ENCODE measurements at regions of chr18 and their contacts with region 1.

Region 1: GRCh38 chr18:3062798-3063680 is 50.1 kb upstream of the LPIN2 start:
- DNase-seq: peak; percentile 63 to 78 (median 66)
- H3K4me3 ChIP-seq: peak overlapping the region in 1 of 2 donors; percentile 53
- H3K4me3 Mint-ChIP-seq: peak overlapping the region; percentile 70 to 86 (median 81)
- H3K27ac ChIP-seq: peak overlapping the region; percentile 93
- H3K27ac Mint-ChIP-seq: peak overlapping the region; percentile 91 to 100 (median 98)
- H3K4me1 ChIP-seq: peaks cover 67% of the 10 kb centered on the region
- H3K4me1 Mint-ChIP-seq: peaks cover 52 to 72% (median 64%) of the 10 kb centered on the region in 4 donors
- H3K27me3 ChIP-seq: no peaks in the 10 kb centered on the region
- H3K27me3 Mint-ChIP-seq: no peaks in the 10 kb centered on the region

Region 2: DNA sequence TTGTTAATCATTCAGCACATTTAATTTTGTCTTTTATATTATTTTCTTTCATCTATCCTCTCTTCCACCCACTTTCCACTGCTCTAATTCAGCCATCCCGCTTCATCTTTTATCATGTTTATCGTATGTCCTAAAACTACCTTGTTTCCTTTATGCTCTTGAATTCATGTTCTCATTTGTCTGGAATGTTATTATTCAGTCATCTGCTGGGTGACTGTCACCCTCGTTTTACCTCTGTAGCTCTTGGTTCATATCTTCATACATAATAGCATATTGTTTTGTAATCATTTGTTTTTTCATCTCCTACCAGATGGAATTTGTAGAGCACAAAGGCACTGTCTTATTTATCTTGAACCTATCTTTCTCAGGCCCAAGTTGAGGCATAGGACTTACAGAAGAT is 370.5 kb before region 1 on chr18:
- CTCF ChIA-PET with region 1: no interaction called
- POLR2A ChIA-PET with region 1: no interaction called
- intact Hi-C with region 1: no loop called
- DNase-seq: no peak
- H3K4me3 ChIP-seq: no peak overlapping the region
- H3K4me3 Mint-ChIP-seq: peak overlapping the region in 1 of 8 donors; percentile 7
- H3K27ac ChIP-seq: no peak overlapping the region
- H3K27ac Mint-ChIP-seq: peak overlapping the region in 5 of 7 donors; percentile 8 to 54 (median 33)
- H3K4me1 ChIP-seq: peaks cover 21% of the 10 kb centered on the region
- H3K4me1 Mint-ChIP-seq: peaks cover 28 to 49% (median 38%) of the 10 kb centered on the region in 4 donors
- H3K27me3 ChIP-seq: no peaks in the 10 kb centered on the region
- H3K27me3 Mint-ChIP-seq: no peaks in the 10 kb centered on the region

Region 3: GRCh38 chr18:2797951-2798350 is 265.1 kb before region 1 on chr18:
- CTCF ChIA-PET with region 1: no interaction called
- POLR2A ChIA-PET with region 1: no interaction called
- intact Hi-C with region 1: no loop called
- DNase-seq: no peak
- H3K4me3 ChIP-seq: no peak overlapping the region
- H3K4me3 Mint-ChIP-seq: no peak overlapping the region
- H3K27ac ChIP-seq: no peak overlapping the region
- H3K27ac Mint-ChIP-seq: peak overlapping the region in 2 of 7 donors; percentile 43 to 62
- H3K4me1 ChIP-seq: no peaks in the 10 kb centered on the region
- H3K4me1 Mint-ChIP-seq: peaks cover under 1 to 15% (median 9%) of the 10 kb centered on the region in 4 donors
- H3K27me3 ChIP-seq: no peaks in the 10 kb centered on the region
- H3K27me3 Mint-ChIP-seq: no peaks in the 10 kb centered on the region

Region 4: DNA sequence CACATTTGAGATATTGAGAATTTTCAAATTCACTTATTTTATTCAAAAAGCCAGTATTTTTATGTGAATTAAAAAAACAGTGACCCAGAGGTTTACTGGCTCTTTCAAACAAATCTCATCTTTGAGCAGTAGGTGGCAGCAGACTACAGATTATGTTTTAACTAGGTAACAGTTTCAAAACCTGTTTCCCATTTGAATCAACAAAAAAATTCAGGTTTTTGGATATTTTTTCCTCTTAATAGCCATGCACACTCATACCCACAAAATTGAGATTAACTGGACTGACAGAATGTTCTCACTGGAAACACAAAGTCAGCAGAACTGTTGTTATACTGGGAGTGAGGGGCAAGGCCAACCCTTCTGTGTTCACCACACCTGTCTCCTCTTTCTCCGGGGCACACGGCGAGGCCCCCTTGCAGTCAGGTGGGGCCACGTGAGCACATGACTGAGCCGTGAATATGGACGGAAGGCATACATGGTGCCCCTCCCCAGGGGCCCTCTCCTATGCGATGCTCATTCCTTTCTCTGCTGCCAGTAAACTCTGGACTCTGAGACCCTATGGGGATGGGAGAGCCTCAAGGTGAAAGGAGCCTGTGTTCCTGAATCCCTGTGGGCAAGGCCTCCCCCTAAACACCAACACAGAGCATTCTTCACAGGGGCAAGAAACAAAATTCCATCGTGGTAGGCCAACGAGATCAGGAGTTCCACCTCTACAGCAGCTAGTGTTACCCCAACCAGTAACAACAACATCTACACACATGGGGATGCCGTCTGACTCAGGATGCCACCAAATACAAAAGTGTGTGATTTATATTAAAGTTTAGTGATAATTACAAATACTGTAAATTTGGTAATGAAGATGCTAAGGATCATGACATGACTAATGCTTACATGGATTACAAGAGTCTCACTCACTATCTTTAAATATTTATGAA is 130.5 kb before region 1 on chr18:
- CTCF ChIA-PET with region 1: interaction called, 56 read pairs
- POLR2A ChIA-PET with region 1: interaction called, 3 read pairs
- intact Hi-C with region 1: loop called (anchors 1 kb)
- DNase-seq: peak; percentile 59 to 79 (median 73)
- H3K4me3 ChIP-seq: no peak overlapping the region
- H3K4me3 Mint-ChIP-seq: peak overlapping the region in 6 of 8 donors; percentile 18 to 64 (median 44)
- H3K27ac ChIP-seq: peak overlapping the region; percentile 56
- H3K27ac Mint-ChIP-seq: peak overlapping the region; percentile 83 to 94 (median 89)
- H3K4me1 ChIP-seq: peaks cover 36% of the 10 kb centered on the region
- H3K4me1 Mint-ChIP-seq: peaks cover 29 to 43% (median 37%) of the 10 kb centered on the region in 4 donors
- H3K27me3 ChIP-seq: no peaks in the 10 kb centered on the region
- H3K27me3 Mint-ChIP-seq: no peaks in the 10 kb centered on the region

Region 5: DNA sequence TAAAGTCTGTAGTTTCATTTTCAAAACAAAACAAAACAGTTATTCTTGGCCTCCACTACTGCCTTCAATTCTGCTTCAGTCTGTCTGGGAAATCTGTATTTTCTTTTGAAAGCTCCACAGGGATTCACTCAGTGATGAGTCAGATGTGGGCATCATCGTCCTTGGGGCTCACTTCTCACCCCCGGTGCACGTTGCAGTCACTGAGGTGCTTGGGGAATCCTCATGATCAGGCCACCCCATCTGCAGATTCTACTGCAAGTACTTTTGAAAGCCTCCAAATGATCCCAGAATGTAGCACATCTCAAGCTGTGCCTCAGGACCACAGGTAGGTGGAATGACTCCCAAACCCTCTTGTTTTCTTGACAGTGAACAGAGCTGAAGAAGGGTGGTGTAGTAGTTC is 84.4 kb before region 1 on chr18:
- CTCF ChIA-PET with region 1: interaction called, 27 read pairs
- POLR2A ChIA-PET with region 1: interaction called, 45 read pairs
- intact Hi-C with region 1: no loop called
- DNase-seq: peak in 1 of 5 donors; percentile 74
- H3K4me3 ChIP-seq: peak overlapping the region; percentile 8 to 31
- H3K4me3 Mint-ChIP-seq: peak overlapping the region; percentile 75 to 96 (median 90)
- H3K27ac ChIP-seq: peak overlapping the region; percentile 72
- H3K27ac Mint-ChIP-seq: peak overlapping the region; percentile 89 to 96 (median 93)
- H3K4me1 ChIP-seq: peaks cover 90% of the 10 kb centered on the region
- H3K4me1 Mint-ChIP-seq: peaks cover 55 to 93% (median 68%) of the 10 kb centered on the region in 4 donors
- H3K27me3 ChIP-seq: no peaks in the 10 kb centered on the region
- H3K27me3 Mint-ChIP-seq: no peaks in the 10 kb centered on the region

Region 6: GRCh38 chr18:3012964-3013804 is 49.9 kb before region 1 on chr18 and contains the start of gene LPIN2:
- CTCF ChIA-PET with region 1: interaction called, 651 read pairs
- POLR2A ChIA-PET with region 1: interaction called, 89 read pairs
- intact Hi-C with region 1: loop called (anchors 1 kb)
- DNase-seq: peak; percentile 97 to 98 (median 98)
- H3K4me3 ChIP-seq: peak within 1 kb of the TSS; percentile 55 to 70
- H3K4me3 Mint-ChIP-seq: peak within 1 kb of the TSS; percentile 93 to 99 (median 96)
- H3K27ac ChIP-seq: peak within 1 kb of the TSS; percentile 63
- H3K27ac Mint-ChIP-seq: peak within 1 kb of the TSS; percentile 94 to 98 (median 98)
- H3K4me1 ChIP-seq: peaks cover 68% of the 10 kb centered on the region
- H3K4me1 Mint-ChIP-seq: peaks cover 51 to 75% (median 68%) of the 10 kb centered on the region in 4 donors
- H3K27me3 ChIP-seq: no peaks in the 10 kb centered on the region
- H3K27me3 Mint-ChIP-seq: no peaks in the 10 kb centered on the region
- total RNA-seq, gene LPIN2: 95.4 to 103 TPM

Region 7: GRCh38 chr18:3051718-3052410 is 11.2 kb before region 1 on chr18:
- CTCF ChIA-PET with region 1: interaction called, 15 read pairs
- POLR2A ChIA-PET with region 1: interaction called, 16 read pairs
- intact Hi-C with region 1: no loop called
- DNase-seq: peak in 1 of 5 donors; percentile 11
- H3K4me3 ChIP-seq: no peak overlapping the region
- H3K4me3 Mint-ChIP-seq: peak overlapping the region; percentile 15 to 78 (median 42)
- H3K27ac ChIP-seq: no peak overlapping the region
- H3K27ac Mint-ChIP-seq: peak overlapping the region; percentile 12 to 91 (median 82)
- H3K4me1 ChIP-seq: peaks cover 33% of the 10 kb centered on the region
- H3K4me1 Mint-ChIP-seq: peaks cover 27 to 38% (median 32%) of the 10 kb centered on the region in 4 donors
- H3K27me3 ChIP-seq: no peaks in the 10 kb centered on the region
- H3K27me3 Mint-ChIP-seq: no peaks in the 10 kb centered on the region

Region 8: DNA sequence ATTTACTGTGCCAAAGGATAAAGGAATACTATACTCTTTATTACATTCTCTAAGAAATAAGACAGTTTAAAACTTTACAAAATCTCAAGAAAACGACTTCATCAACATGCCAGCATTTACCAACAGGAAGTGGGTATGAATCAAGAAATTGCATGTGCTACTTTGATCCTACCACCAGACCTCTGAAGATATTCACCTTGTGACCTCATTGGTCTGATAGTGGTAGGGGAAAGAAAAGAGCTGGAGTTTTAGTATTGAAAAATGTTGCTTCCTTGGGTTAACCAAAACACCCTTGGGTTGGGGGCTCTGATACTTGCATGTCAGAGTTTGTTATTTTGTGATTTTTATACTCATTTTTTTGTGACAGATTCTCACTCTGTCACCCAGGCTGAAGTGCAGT is 34.0 kb after region 1 on chr18:
- CTCF ChIA-PET with region 1: interaction called, 27 read pairs
- POLR2A ChIA-PET with region 1: interaction called, 4 read pairs
- intact Hi-C with region 1: no loop called
- DNase-seq: peak; percentile 57 to 78 (median 63)
- H3K4me3 ChIP-seq: no peak overlapping the region
- H3K4me3 Mint-ChIP-seq: peak overlapping the region in 6 of 8 donors; percentile 1 to 47 (median 23)
- H3K27ac ChIP-seq: no peak overlapping the region
- H3K27ac Mint-ChIP-seq: peak overlapping the region in 6 of 7 donors; percentile 18 to 86 (median 67)
- H3K4me1 ChIP-seq: peaks cover 18% of the 10 kb centered on the region
- H3K4me1 Mint-ChIP-seq: peaks cover 12 to 22% (median 18%) of the 10 kb centered on the region in 4 donors
- H3K27me3 ChIP-seq: no peaks in the 10 kb centered on the region
- H3K27me3 Mint-ChIP-seq: no peaks in the 10 kb centered on the region

Region 9: GRCh38 chr18:3261371-3262246 is 198.6 kb after region 1 on chr18 and contains the start of gene MYL12B:
- CTCF ChIA-PET with region 1: no interaction called
- POLR2A ChIA-PET with region 1: interaction called, 15 read pairs
- intact Hi-C with region 1: no loop called
- DNase-seq: peak; percentile 83 to 91 (median 86)
- H3K4me3 ChIP-seq: peak within 1 kb of the TSS; percentile 89 to 94
- H3K4me3 Mint-ChIP-seq: peak within 1 kb of the TSS; percentile 94 to 100 (median 98)
- H3K27ac ChIP-seq: peak within 1 kb of the TSS; percentile 90
- H3K27ac Mint-ChIP-seq: peak within 1 kb of the TSS; percentile 98 to 100 (median 99)
- H3K4me1 ChIP-seq: peaks cover 81% of the 10 kb centered on the region
- H3K4me1 Mint-ChIP-seq: peaks cover 57 to 92% (median 70%) of the 10 kb centered on the region in 4 donors
- H3K27me3 ChIP-seq: no peaks in the 10 kb centered on the region
- H3K27me3 Mint-ChIP-seq: no peaks in the 10 kb centered on the region
- total RNA-seq, gene MYL12B: 199 to 219 TPM

Region 10: DNA sequence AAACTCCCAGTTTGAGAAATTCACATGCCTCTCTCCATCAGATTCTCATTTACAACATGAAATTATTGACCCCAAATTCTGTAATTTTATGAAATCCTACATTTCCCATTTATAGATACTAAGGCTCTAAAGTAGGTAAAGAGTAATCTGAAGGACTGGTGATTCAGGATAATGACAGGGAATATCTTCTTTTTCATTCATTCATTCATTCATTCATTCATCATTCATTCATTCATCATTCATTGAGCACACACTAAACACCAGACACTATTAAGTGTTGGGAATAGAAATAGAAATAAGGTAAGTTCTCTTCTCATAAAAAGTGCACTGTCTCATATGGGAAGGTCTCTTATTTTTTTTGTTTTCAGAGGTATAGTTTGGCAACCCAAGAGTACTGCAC is 503.8 kb after region 1 on chr18:
- CTCF ChIA-PET with region 1: no interaction called
- POLR2A ChIA-PET with region 1: no interaction called
- intact Hi-C with region 1: no loop called
- DNase-seq: no peak
- H3K4me3 ChIP-seq: no peak overlapping the region
- H3K4me3 Mint-ChIP-seq: no peak overlapping the region
- H3K27ac ChIP-seq: no peak overlapping the region
- H3K27ac Mint-ChIP-seq: no peak overlapping the region
- H3K4me1 ChIP-seq: no peaks in the 10 kb centered on the region
- H3K4me1 Mint-ChIP-seq: no peaks in the 10 kb centered on the region
- H3K27me3 ChIP-seq: no peaks in the 10 kb centered on the region
- H3K27me3 Mint-ChIP-seq: peaks cover 0 to 1% of the 10 kb centered on the region in 2 donors